B cell (primary cell): ENCODE measurements at regions of chr11 and their contacts with region 1.

Region 1: DNA sequence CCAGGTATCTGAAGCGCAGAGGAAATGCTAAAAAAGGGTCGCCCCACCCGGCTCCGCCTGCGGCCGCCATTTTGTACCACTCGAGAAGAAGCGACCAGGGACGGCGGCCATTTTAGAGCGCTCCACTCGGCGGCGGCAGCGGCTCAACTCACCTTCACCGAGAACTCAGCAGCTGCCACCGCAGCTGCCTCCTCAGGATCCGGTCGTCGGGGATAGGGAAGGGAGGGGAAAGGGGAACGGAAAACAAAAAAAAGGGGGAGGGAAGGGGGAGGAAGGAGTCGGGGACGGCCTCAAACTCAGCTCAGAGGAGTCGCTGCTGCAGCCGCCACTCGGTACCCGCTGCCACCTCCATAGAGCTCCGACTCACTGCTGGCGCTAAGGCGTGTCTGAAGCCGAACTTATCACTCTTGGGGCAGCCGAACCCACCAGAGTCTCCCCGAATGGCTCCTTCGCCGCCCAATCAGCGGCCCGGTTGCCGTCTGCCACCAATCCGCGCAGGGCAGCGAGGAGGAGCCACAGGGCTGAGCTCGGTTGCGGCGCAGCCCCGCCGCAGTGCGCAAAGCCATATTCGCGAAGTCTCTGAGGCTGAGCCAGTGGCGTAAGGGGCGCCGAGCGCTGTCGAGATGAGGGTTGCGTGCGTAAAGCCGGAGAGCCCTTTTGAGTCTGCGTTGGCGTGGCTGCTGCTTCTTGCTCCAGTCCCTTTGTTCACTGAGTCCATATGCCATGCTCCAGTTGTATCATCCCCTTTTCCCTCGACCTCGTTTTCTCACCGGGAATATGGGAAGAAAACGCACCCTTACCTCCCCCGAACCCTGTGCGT is at the start of gene EIF4G2:
- DNase-seq: peak; percentile 99
- ATAC-seq: peak; percentile 89
- H3K4me3 ChIP-seq: peak within 1 kb of the TSS; percentile 89 to 97 (median 94)
- H3K4me3 Mint-ChIP-seq: peak within 1 kb of the TSS; percentile 99
- H3K27ac ChIP-seq: peak within 1 kb of the TSS; percentile 92 to 96
- H3K27ac Mint-ChIP-seq: peak within 1 kb of the TSS; percentile 99
- H3K4me1 ChIP-seq: peaks cover 24 to 26% of the 10 kb centered on the region in 2 donors
- H3K4me1 Mint-ChIP-seq: peaks cover 39% of the 10 kb centered on the region
- H3K27me3 ChIP-seq: no peaks in the 10 kb centered on the region
- H3K27me3 Mint-ChIP-seq: no peaks in the 10 kb centered on the region
- CTCF ChIP-seq: no peak
- total RNA-seq, gene EIF4G2: 530 and 592 TPM in 2 replicates

Region 2: GRCh38 chr11:10750838-10751580 is 57.8 kb before region 1 on chr11 and contains the start of gene CTR9:
- CTCF ChIA-PET with region 1: interaction called, 3 read pairs
- POLR2A ChIA-PET with region 1: interaction called, 20 read pairs
- intact Hi-C with region 1: loop called (anchors 1 kb)
- DNase-seq: peak; percentile 95
- ATAC-seq: peak; percentile 92
- H3K4me3 ChIP-seq: peak within 1 kb of the TSS; percentile 77 to 96 (median 92)
- H3K4me3 Mint-ChIP-seq: peak within 1 kb of the TSS; percentile 95
- H3K27ac ChIP-seq: peak within 1 kb of the TSS; percentile 78 to 85
- H3K27ac Mint-ChIP-seq: peak within 1 kb of the TSS; percentile 91
- H3K4me1 ChIP-seq: peaks cover 8 to 12% of the 10 kb centered on the region in 2 donors
- H3K4me1 Mint-ChIP-seq: peaks cover 21% of the 10 kb centered on the region
- H3K27me3 ChIP-seq: no peaks in the 10 kb centered on the region
- H3K27me3 Mint-ChIP-seq: no peaks in the 10 kb centered on the region
- CTCF ChIP-seq: no peak
- total RNA-seq, gene CTR9: 46.7 and 52.0 TPM in 2 replicates

Region 3: GRCh38 chr11:10792398-10792975 is 16.3 kb before region 1 on chr11:
- CTCF ChIA-PET with region 1: interaction called, 39 read pairs
- POLR2A ChIA-PET with region 1: interaction called, 7 read pairs
- intact Hi-C with region 1: loop called (anchors 2 kb)
- DNase-seq: peak; percentile 86
- ATAC-seq: peak; percentile 97
- H3K4me3 ChIP-seq: peak overlapping the region in 2 of 5 experiments; percentile 17 to 32
- H3K4me3 Mint-ChIP-seq: peak overlapping the region; percentile 17
- H3K27ac ChIP-seq: no peak overlapping the region
- H3K27ac Mint-ChIP-seq: no peak overlapping the region
- H3K4me1 ChIP-seq: peaks cover 13 to 20% of the 10 kb centered on the region in 2 donors
- H3K4me1 Mint-ChIP-seq: peaks cover 21% of the 10 kb centered on the region
- H3K27me3 ChIP-seq: no peaks in the 10 kb centered on the region
- H3K27me3 Mint-ChIP-seq: no peaks in the 10 kb centered on the region
- CTCF ChIP-seq: peak; percentile 90

Region 4: DNA sequence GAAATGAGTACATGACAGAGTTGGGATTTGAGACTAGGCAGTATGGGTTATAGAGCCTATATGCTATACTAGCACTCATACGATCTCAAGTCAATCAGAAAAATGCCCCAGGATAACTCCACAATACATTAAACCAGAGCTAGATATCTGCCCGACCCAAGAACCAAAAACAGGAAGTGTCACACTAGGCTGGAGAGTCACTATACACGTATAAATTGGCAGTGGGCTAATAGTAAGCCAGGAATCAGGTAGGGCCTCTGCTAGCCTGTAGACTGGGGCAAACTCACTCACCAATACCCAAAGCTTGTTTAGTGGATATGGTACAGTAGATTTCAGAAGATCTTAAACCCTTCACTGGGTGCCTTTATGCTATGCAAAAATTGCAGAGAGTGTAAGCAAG is 16.1 kb after region 1 on chr11:
- CTCF ChIA-PET with region 1: interaction called, 6 read pairs
- POLR2A ChIA-PET with region 1: interaction called, 27 read pairs
- intact Hi-C with region 1: loop called (anchors 1 kb)
- DNase-seq: peak; percentile 74
- ATAC-seq: peak; percentile 97
- H3K4me3 ChIP-seq: peak overlapping the region in 1 of 5 experiments; percentile 20
- H3K4me3 Mint-ChIP-seq: peak overlapping the region; percentile 70
- H3K27ac ChIP-seq: peak overlapping the region; percentile 49 to 71
- H3K27ac Mint-ChIP-seq: peak overlapping the region; percentile 89
- H3K4me1 ChIP-seq: peaks cover 21 to 24% of the 10 kb centered on the region in 2 donors
- H3K4me1 Mint-ChIP-seq: peaks cover 24% of the 10 kb centered on the region
- H3K27me3 ChIP-seq: no peaks in the 10 kb centered on the region
- H3K27me3 Mint-ChIP-seq: no peaks in the 10 kb centered on the region
- CTCF ChIP-seq: no peak

Region 5: DNA sequence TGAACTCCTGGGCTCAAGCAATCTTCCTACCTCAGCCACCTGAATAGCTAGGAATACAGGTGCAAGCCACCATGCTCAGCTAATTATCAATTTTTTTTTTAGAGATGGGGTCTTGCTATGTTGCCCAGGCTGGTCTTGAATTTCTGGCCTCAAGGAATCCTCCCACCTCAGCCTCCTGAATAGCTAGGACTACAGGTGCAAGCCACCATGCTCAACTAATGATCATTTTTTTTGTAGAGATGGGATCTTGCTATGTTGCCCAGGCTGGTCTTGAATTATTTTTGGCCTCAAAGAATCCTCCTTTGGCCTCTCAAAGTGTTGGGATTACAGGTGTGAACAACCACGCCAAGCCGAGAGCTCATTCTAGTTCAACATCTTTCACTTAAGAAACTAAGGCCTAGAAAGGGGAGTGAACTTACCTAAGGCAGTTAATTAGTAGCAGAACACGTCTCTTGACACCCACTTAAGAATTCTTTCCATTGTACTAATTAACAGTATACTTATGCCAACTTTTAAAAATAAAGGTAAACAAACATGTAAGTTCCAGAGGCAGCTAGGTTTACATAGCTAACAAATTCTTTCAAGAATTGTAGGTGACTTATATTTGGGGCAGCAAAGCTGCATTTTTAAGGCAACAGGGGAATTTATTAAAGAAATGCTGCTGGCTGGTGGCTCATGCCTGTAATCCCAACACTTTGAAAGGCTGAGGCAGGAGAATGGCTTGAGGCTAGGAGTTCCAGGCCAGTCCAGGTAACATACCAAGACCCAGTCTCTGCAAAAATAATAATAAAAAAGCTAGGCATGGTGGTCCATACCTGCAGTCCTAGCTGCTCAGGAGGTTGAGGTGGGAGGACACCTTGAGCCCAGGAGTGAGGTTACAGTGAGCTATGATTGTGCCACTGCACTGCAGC is 39.5 kb after region 1 on chr11:
- CTCF ChIA-PET with region 1: interaction called, 3 read pairs
- POLR2A ChIA-PET with region 1: interaction called, 16 read pairs
- intact Hi-C with region 1: no loop called
- DNase-seq: no peak
- ATAC-seq: no peak
- H3K4me3 ChIP-seq: no peak overlapping the region
- H3K4me3 Mint-ChIP-seq: no peak overlapping the region
- H3K27ac ChIP-seq: no peak overlapping the region
- H3K27ac Mint-ChIP-seq: peak overlapping the region; percentile 20
- H3K4me1 ChIP-seq: no peaks in the 10 kb centered on the region
- H3K4me1 Mint-ChIP-seq: peaks cover 10% of the 10 kb centered on the region
- H3K27me3 ChIP-seq: no peaks in the 10 kb centered on the region
- H3K27me3 Mint-ChIP-seq: no peaks in the 10 kb centered on the region
- CTCF ChIP-seq: no peak

Region 6: GRCh38 chr11:10878408-10879214 is 69.8 kb after region 1 on chr11:
- CTCF ChIA-PET with region 1: interaction called, 9 read pairs
- POLR2A ChIA-PET with region 1: no interaction called
- intact Hi-C with region 1: loop called (anchors 1 kb)
- DNase-seq: peak; percentile 79
- ATAC-seq: peak; percentile 82
- H3K4me3 ChIP-seq: no peak overlapping the region
- H3K4me3 Mint-ChIP-seq: no peak overlapping the region
- H3K27ac ChIP-seq: no peak overlapping the region
- H3K27ac Mint-ChIP-seq: peak overlapping the region; percentile 57
- H3K4me1 ChIP-seq: peaks cover 7 to 9% of the 10 kb centered on the region in 2 donors
- H3K4me1 Mint-ChIP-seq: peaks cover 8% of the 10 kb centered on the region
- H3K27me3 ChIP-seq: no peaks in the 10 kb centered on the region
- H3K27me3 Mint-ChIP-seq: no peaks in the 10 kb centered on the region
- CTCF ChIP-seq: peak; percentile 87

Region 7: DNA sequence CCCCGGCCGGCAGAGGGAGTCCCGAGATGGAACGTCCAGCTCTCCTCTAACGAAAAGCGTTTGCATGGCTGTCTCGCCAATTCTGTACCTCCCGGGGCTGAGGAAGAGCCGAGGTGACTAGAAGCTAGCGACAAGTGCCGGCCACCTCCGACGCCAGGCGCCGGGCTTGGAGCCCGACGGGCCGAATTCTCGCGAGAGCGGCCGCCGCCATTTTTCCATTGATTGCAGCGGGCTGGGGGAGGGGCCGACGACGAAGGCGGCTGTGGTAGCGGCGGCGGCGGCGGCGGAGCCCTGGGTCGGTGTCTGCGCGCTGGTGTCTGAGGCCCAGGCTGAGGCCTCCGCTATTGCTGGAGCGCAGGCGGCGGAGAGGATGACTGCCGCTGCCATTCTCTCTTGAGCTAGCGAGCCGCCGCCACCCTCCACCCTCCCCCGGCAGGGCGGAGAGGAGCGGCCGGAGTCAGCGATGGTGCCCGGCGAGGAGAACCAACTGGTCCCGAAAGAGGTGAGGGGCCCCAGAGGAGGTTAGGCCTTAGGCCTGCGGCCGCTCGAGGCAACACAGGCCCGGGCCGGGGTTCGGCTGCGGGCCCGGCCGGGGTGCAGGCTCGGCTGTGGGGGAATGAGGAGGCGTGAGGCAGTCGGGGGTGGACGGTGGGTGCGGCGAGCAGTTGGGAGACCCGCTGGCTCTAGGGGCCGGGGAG is 1033.1 kb after region 1 on chr11 and contains the start of gene USP47:
- CTCF ChIA-PET with region 1: interaction called, 3 read pairs
- POLR2A ChIA-PET with region 1: interaction called, 3 read pairs
- intact Hi-C with region 1: loop called (anchors 5 kb)
- DNase-seq: peak; percentile 96
- ATAC-seq: peak; percentile 81
- H3K4me3 ChIP-seq: peak within 1 kb of the TSS; percentile 85 to 95 (median 92)
- H3K4me3 Mint-ChIP-seq: no peak within 1 kb of the TSS
- H3K27ac ChIP-seq: peak within 1 kb of the TSS; percentile 87 to 98
- H3K27ac Mint-ChIP-seq: no peak within 1 kb of the TSS
- H3K4me1 ChIP-seq: peaks cover 31 to 43% of the 10 kb centered on the region in 2 donors
- H3K4me1 Mint-ChIP-seq: peaks cover 28% of the 10 kb centered on the region
- H3K27me3 ChIP-seq: peaks cover 0 to 6% (median 2%) of the 10 kb centered on the region in 4 experiments
- H3K27me3 Mint-ChIP-seq: peaks cover 9% of the 10 kb centered on the region
- CTCF ChIP-seq: peak; percentile 40
- total RNA-seq, gene USP47: 52.9 and 61.1 TPM in 2 replicates